Cardiac septum (tissue), 1 donor: ENCODE measurements at regions of chr10 and their contacts with region 1.

Region 1: DNA sequence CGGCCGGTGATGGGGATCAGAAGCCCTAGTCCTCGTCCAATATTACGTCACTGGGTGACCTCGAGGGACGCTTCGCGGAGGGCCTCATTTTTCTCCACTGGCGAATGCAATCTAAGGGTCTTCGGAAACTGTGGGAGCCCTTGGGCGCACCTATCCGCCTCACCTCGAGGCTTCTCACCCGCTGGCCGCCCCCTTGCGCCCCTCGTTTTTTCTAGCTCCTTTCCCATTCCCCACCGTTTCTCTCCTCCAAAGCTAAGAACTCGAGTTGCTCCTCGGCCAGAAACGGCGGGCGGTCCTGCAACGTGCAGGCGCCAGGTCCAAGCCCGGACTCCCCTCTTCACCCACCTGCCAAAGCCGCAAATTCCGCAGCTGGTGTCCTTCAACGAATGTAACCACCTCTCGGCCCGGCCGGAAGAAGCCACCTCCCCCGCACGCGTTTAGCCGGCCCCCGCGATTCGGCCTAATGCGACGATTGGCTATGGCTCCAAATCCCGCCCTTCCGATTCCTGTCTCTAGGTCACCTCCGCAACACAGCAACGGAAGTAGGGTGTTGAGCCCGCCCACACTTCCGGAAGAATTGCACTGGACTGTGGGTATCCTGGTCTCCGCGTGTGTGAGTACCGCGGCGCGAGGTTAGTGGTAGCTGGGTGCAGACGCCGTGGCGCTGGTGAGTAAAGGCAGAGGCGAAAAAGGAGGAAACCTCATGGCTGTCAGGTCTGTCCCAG is at the starts of genes ATP5MK and PDCD11:
- DNase-seq: peak; percentile 99
- total RNA-seq, gene ATP5MK: 958 TPM
- total RNA-seq, gene PDCD11: 15.5 TPM

Region 2: DNA sequence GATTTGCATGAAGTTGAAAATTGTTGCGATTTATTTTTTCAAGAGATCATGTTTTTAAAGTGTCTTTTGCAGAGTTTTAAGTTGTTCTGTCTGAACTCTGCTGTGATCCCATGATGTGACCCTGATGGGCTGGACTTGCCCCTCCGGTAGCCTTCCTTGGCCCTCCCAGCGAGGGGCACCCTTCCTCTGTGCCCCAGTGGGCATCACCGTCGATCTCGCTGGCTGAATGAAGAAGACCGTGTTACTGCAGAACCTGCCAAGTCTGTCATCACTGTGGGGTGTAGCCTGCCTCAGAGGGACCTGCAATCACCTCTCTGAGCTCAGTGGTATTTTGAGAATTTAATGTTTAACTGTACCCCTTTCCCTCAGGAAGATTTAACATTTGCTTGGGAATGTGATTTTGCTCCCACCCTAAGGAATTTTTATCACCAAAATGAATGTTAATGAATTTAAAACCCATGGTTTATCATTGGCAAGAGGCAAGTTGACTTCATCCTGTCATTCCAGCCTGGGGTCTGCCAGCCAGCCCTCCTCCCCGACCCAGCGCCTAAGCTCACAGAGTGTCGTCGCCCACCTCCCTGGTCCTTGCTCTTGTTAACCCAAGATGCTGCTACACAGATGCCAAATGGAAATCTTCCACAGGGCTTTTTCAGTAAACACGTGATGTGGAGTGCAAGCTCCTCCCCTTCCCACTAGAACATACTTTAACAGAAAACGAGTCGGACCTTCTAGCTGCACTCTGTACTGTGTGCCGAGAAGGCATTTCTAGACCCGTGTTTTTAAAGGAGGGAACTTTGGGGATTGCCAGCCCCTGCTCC is 318.5 kb before region 1 on chr10:
- intact Hi-C with region 1: no loop called
- DNase-seq: no peak

Region 3: GRCh38 chr10:103367782-103368518 is 28.3 kb before region 1 on chr10 and contains the start of gene TAF5:
- intact Hi-C with region 1: loop called (anchors 2 kb)
- DNase-seq: peak; percentile 96
- total RNA-seq, gene TAF5: 1.4 TPM